H1 (cell line): ENCODE measurements at regions of chr1 and their contacts with region 1.

Region 1: DNA sequence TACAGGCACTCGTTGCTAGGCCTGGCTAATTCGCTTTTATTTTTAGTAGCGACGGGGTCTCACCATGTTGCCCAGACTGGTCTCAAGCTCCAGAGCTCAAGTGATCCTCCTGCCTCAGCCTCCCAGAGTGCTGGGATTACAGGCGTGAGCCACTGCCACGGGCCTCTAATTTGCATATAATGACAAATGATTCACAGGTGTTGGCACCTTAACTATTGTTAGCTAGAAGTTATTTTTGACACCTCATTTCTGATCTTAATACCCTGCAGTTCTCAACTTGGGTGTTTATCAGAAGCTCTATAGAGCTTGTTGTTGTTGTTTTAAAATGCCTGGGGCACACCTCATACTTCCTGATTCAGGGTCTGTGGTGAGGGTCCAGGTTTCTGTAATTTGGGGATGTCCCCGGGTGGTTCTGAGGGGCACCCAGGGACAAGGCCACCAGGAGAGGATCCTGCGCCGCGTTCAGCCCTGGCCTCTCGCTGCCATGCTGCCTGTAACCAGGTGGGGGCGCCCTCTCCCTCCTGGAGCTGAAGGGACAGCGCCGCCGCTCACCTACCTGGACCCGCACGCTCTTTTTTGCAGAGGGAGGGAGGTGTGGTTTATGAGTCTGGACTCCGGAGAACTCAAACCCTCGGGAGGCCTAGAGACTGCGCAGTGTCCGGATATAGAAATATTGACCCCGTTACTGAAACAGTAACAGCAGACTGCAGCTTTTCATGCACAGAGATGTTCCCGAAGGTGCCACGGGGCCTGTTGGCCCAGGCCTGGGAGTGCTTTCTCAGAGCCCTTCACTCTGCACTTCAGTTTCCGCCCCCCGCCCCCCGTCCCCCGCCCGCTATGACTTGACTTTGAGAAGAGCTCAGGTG is 23.0 kb upstream of the NEK2 start:
- DNase-seq: peak in 1 of 2 experiments; percentile 99
- H3K4me3 ChIP-seq: peak overlapping the region; percentile 28 to 72 (median 61); a peak in 7 of 8 replicates
- H3K27ac ChIP-seq: no peak overlapping the region
- H3K4me1 ChIP-seq: no peaks in the 10 kb centered on the region; a peak in 1 of 7 replicates
- H3K27me3 ChIP-seq: peaks cover 1 to 13% (median 5%) of the 10 kb centered on the region in 4 experiments; a peak in 6 of 7 replicates
- CTCF ChIP-seq: peak; percentile 98 to 99 (median 99)
- EP300 ChIP-seq: no peak
- POLR2A ChIP-seq: no peak
- RAD21 ChIP-seq: peak; percentile 93 to 95

Region 2: DNA sequence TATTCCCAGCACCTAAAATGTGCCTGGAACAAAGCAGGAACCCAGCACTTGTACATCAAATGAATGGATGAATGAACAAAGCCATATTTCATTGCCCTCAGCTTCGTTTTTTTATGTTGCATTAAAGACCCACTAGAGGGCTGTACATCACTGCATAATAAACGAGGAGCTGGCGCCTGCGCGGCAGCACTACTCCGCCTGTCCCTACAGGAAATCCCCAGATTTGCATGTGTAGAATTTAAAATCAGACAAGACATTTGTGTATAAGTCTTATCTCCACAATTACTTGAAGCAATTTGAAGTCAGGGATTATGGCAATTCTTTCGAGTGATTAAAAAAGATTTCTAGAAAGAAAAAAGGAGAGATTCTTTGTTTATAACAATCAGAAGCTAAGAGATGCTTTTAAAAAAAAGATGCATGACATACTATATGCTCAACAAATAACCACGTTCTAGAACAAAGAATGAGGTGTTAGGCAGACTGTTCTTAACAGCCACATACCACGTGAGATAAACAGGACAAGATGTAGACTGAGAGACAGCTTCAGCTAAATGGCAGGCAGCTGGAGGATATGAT is 17.6 kb before region 1 on chr1:
- CTCF ChIA-PET with region 1: interaction called, 50 read pairs
- POLR2A ChIA-PET with region 1: no interaction called
- DNase-seq: no peak
- H3K4me3 ChIP-seq: no peak overlapping the region
- H3K27ac ChIP-seq: no peak overlapping the region
- H3K4me1 ChIP-seq: peaks cover 0 to 3% (median 0%) of the 10 kb centered on the region in 4 experiments; a peak in 1 of 7 replicates
- H3K27me3 ChIP-seq: no peaks in the 10 kb centered on the region
- CTCF ChIP-seq: peak; percentile 38 to 85 (median 55)
- EP300 ChIP-seq: no peak
- POLR2A ChIP-seq: no peak
- RAD21 ChIP-seq: peak; percentile 83 to 84

Region 3: DNA sequence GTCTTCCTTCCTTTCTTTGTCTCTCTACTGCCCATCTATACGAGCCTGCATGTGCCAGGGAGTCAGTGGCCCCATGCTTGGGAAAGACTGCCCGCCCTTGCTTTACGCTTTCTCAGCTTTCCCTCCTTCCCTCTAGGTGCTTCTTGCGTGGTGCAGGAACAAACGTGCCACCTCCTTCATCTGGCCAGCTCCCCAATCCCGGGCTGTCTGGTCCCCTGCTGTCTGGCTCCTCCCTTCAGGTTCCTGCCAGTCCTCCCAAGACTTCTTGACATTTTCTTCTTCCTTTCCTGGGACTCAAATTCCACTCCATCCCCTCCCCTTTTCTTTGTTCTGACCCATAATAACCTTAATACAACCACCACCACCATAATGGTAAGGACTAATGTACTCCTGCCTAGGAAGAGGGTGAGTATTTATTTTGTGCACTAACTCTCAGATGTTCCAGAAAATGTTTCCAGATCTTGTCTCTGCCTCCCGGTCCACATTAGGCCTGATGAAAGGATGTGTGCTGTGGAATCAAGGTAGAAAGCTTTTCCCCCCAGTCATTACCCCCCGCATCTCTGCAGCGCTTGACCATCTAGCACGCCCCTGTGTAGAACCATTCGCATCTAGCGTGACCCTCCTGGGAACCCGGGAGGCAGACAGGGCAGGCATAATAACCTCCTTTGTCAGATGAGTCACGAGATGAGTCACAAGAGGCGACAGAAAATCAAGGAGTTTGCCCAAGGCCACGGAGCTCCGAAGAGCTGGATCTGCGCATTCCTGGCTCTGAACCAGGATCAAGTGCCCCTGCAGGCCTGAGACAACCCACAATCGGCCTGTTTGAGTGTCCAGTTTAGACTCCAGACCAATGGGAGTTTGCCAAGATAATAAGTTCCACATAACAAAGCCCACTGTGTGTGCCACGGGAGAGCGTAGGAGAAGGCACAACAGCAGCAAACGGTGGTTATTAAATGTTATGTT is 37.1 kb after region 1 on chr1:
- CTCF ChIA-PET with region 1: interaction called, 21 read pairs
- POLR2A ChIA-PET with region 1: no interaction called
- DNase-seq: peak in 1 of 2 experiments; percentile 39
- H3K4me3 ChIP-seq: no peak overlapping the region
- H3K27ac ChIP-seq: no peak overlapping the region
- H3K4me1 ChIP-seq: no peaks in the 10 kb centered on the region; a peak in 3 of 7 replicates
- H3K27me3 ChIP-seq: no peaks in the 10 kb centered on the region; a peak in 1 of 7 replicates
- CTCF ChIP-seq: no peak
- EP300 ChIP-seq: no peak
- POLR2A ChIP-seq: no peak
- RAD21 ChIP-seq: no peak

Region 4: DNA sequence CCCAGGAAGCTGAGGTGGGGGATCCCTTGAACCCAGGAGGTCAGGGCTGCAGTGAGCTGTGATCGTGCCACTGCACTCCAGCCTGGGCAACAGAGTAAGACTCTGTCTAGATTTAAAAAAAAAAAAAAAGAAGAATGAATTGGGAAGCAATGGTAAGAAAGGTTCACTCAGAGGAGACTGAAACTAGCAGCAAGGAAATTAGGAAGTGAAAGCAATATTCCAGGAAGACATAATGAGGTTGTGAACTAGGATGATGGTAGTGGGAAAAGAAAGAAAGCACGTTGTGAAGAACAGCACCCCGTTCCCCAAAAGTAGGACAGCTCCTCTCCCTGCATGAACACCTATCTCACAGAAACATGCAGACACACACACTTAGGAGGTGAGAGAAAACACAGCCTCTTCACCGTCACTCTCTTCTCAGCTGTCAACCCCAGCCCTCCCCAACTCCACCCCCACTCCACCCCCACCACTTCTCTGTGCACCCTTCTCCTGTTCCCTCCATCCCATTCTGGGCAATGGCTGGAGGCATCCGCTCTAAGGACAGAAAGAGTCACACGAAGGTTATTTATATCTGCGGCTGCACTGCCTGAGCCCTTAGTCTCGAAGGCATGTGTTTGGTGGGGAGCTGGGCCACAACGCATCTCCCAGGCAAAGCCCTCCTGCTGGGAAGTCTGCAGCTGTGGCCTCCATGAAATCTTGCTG is 234.0 kb after region 1 on chr1:
- CTCF ChIA-PET with region 1: interaction called, 11 read pairs
- POLR2A ChIA-PET with region 1: no interaction called
- DNase-seq: no peak
- H3K4me3 ChIP-seq: no peak overlapping the region
- H3K27ac ChIP-seq: no peak overlapping the region
- H3K4me1 ChIP-seq: peaks cover 2 to 23% (median 10%) of the 10 kb centered on the region in 4 experiments; a peak in 6 of 7 replicates
- H3K27me3 ChIP-seq: no peaks in the 10 kb centered on the region
- CTCF ChIP-seq: no peak
- EP300 ChIP-seq: no peak
- POLR2A ChIP-seq: no peak
- RAD21 ChIP-seq: no peak

Region 5: GRCh38 chr1:212035123-212035834 is 336.9 kb after region 1 on chr1 and contains the starts of genes DTL and INTS7:
- CTCF ChIA-PET with region 1: interaction called, 20 read pairs
- POLR2A ChIA-PET with region 1: interaction called, 3 read pairs
- DNase-seq: peak; percentile 98
- H3K4me3 ChIP-seq: peak within 1 kb of the TSS; percentile 62 to 99 (median 88)
- H3K27ac ChIP-seq: peak within 1 kb of the TSS; percentile 97
- H3K4me1 ChIP-seq: peaks cover 0 to 3% (median 0%) of the 10 kb centered on the region in 4 experiments; a peak in 1 of 7 replicates
- H3K27me3 ChIP-seq: no peaks in the 10 kb centered on the region
- CTCF ChIP-seq: peak; percentile 25 to 88 (median 81)
- EP300 ChIP-seq: 0 out of 3 replicates have a peak, but pooled peaks of 1 of the 2 experiments have one; percentile 20
- POLR2A ChIP-seq: peak; percentile 87 to 97
- RAD21 ChIP-seq: no peak
- total RNA-seq, gene DTL: 46.9 and 48.7 TPM in 2 replicates
- total RNA-seq, gene INTS7: 22.4 and 24.3 TPM in 2 replicates